Activated T-helper 2 cell treated with anti-CD3 and anti-CD28 coated beads, Interferon-gamma antibody, Interleukin-2, Interleukin-4, amounts not matched to agents 10 μg/mL and 5 μg/mL and 100 μg/mL, durations not matched to agents 14 hours and 24 hours and 36 hours (primary cell): ENCODE measurements at regions of chr17 and their contacts with region 1.

Region 1: DNA sequence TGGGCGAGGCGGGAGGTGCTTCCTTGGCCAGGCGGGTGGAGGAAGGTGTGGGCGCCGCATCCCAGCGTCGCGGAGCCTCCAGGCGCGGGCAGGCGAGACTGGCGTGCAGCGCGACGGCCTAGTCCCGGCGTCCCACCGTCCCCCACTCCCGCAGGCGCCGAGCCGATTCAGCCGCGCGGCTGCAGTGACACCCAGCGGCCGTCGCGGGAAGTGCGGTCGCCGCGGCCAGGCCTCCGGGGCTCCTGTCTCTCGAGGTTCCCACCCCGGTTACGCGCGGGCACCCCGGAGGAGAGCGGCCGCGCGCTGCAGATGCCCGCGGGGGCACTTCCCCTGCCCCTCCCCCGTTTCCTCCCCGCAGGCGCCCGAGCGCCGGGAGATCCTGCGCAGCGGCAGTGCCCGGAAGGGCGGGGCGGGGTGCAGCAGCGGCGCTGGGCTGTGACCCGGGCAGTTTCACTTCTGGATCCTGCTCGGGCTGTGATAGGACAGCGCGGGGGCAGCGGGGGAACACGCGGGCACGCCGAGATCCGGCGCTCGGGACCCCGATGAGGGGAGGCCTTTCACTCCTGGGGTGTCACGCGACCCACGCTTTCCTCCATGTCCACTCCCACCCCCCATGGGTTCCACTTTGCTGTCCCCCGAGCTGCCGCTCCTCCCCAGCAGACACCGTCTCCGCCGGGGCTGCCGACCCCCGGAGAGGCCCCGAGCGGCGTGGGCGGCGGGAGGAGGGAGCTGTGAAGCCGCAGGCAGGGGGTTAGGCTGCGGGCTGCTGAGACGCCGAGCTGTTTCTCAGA is 16.6 kb downstream of the GRB7 start:
- DNase-seq: peak; percentile 98
- H3K4me3 Mint-ChIP-seq: peak overlapping the region; percentile 19
- H3K27ac Mint-ChIP-seq: peak overlapping the region; percentile 56
- H3K4me1 Mint-ChIP-seq: peaks cover 52% of the 10 kb centered on the region
- H3K27me3 Mint-ChIP-seq: no peaks in the 10 kb centered on the region

Region 2: GRCh38 chr17:39636927-39637736 is 117.2 kb before region 1 on chr17 and contains the start of gene STARD3:
- intact Hi-C with region 1: loop called (anchors 5 kb)
- DNase-seq: peak; percentile 86
- H3K4me3 Mint-ChIP-seq: peak within 1 kb of the TSS; percentile 92
- H3K27ac Mint-ChIP-seq: peak within 1 kb of the TSS; percentile 71
- H3K4me1 Mint-ChIP-seq: peaks cover 24% of the 10 kb centered on the region
- H3K27me3 Mint-ChIP-seq: no peaks in the 10 kb centered on the region
- total RNA-seq, gene STARD3: 51.5 and 54.4 TPM in 2 replicates

Region 3: DNA sequence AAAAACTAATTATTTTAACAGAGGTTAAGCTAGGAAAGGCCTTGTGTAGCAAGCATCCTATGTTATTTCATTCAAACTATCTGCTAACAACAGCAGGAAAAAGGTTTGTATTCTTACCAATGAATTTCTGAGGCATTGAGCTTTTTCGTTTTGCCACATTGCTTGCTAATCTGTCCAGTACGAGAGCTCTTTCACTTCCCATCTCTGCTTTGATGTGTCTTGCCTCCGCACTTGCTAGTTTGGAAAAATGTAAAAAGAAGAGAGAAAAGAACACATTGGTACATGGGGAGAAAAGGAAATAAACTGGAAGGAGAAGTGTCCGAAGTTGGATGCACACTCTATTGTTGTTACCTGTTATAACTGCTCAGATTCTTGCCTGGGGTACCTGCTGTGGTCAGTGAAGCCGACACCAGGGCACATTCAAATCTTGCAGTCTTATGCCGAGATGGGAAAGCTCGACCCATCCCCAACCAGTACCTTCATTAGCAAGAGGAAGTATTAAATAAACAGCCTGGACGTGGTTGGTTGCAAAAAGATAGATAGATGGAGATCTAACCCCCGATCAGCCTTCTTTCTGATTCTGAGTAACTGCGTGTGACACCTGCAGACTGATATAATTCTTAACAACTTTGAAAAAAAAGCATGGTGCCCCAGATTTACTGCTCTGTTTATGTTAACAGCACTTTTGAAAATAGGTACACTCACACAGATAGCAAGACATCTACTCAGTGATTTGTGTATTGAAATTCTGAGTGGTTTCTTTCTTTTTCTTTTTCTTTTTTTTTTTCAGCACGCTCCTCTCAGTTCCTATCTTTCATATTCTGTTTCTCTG is 23.4 kb after region 1 on chr17:
- intact Hi-C with region 1: no loop called
- DNase-seq: no peak
- H3K4me3 Mint-ChIP-seq: peak overlapping the region; percentile 84
- H3K27ac Mint-ChIP-seq: peak overlapping the region; percentile 77
- H3K4me1 Mint-ChIP-seq: peaks cover 72% of the 10 kb centered on the region
- H3K27me3 Mint-ChIP-seq: no peaks in the 10 kb centered on the region

Region 4: DNA sequence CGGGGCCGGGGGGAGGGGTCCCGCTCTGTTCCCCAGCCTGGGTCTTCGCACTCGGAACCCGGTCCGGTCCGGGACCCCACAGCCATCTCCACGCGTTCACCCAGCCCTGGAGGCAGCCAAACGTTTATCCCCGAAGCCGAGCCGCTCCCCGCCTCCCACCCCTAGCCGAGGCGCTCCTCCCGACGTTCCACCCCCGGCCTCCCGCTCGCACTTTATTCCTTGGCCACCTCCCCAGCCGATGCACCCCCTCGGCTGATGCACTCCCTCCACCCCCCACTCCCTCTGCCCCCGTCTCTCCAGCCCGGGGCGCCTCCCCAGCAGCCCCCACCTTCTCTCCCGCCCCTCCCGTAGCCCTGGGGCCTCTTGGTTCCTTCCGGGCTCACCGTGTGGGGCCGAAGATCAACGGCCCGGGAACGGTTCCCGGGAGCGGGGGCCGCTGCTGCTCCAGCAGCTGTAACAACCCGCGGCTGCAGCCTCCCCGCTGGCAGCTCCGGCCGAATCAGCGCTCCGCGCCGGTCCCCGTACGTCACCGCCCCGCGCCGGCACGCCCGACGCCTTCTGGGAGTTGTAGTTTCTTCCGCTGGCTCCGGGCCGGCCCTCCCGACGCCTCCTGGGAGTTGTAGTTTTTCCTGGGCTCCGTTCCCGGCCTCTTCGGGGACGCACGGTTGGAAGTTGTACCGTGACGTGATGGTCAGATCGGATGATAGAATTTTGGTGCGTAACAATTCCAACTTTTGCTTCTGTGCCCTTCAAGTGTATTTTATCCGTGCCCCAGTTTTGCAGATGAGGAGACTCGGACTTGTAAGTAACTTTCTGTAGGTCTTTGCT is 173.0 kb after region 1 on chr17 and contains the starts of genes LRRC3C and ORMDL3:
- intact Hi-C with region 1: loop called (anchors 5 kb)
- DNase-seq: peak; percentile 89
- H3K4me3 Mint-ChIP-seq: peak within 1 kb of the TSS; percentile 86
- H3K27ac Mint-ChIP-seq: peak within 1 kb of the TSS; percentile 89
- H3K4me1 Mint-ChIP-seq: peaks cover 41% of the 10 kb centered on the region
- H3K27me3 Mint-ChIP-seq: no peaks in the 10 kb centered on the region
- total RNA-seq, gene LRRC3C: not detected in 2 replicates
- total RNA-seq, gene ORMDL3: 66.1 and 74.3 TPM in 2 replicates